ENCODE measurements at regions of chr13 and their contacts with region 1.

Region 1: DNA sequence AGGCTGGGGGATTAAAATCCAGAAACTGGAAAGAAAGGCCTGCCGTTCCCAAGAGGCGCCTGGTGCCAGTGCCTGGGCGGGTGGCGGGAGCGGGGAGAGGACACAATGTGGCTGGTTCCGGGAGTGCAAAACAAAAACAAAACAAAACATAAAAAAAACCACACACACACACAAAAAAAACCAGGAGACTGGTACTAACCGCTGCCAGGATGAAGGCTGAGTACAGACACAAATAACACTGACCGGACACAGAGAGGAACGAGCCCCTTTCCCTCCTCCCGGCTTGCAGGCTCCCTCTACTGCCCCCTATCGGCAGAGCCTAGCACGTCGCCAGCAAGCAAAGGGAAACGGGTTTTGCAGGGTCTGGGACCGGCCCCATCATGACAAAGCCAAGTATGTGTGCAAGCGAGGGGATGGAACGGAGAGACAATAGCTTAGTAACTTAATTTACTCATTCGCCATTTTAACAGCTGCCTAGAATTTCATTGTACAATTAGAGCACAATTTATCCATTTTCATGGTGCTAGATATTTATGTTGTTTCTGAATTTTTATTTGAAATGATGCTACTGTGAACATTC is 17.9 kb upstream of the ZDHHC20 start:
- DNase-seq: peak; percentile 74
- ATAC-seq: peak; percentile 85
- H3K4me3 ChIP-seq: peak overlapping the region; percentile 27
- H3K27ac ChIP-seq: no peak overlapping the region
- H3K4me1 ChIP-seq: no peaks in the 10 kb centered on the region
- H3K27me3 ChIP-seq: no peaks in the 10 kb centered on the region
- CTCF ChIP-seq: peak; percentile 83
- POLR2A ChIP-seq: no peak
- RAD21 ChIP-seq: peak; percentile 75

Region 2: DNA sequence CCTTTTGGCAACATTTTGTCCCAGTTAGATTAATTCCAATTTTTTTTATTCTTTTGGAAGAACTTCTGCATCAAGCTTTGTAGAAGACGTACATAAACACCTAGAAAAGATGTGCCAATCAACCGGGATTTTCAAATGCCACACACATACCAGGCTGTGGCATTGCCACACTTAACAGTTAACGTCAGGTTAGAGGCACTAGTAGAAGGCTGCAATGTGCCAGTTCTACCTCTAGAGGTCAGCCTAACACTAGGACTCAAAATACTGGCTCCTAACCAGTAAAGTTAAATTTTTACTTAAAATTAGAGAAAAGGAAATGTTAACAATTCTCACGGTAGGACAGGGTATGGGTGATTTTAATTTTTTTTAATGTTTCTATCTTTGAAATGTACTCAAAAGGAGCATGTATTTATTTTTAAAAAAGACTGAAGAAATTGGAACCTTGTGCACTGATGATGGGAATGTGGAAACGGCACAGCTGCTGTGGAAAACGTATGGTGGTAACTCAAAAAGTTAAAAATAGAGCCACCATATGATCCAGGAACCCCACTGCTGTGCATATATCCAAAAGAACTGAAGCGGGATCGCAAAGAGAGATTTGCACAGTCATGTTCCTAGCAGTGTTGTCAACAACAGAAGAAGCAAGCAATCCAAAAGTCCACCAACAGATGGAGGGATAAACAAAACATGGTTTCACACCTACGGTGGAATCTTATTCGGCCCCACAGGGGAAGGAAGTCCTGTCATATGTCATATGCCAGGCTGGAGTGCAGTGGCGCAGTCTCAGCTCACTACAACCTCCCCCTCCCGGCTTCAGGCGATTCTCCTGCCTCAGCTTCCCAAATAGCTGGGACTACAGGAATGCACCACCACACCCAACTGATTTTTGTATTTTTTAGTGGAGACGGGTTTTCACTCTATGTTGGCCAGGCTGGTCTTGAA is 981.6 kb before region 1 on chr13:
- CTCF ChIA-PET with region 1: no interaction called
- POLR2A ChIA-PET with region 1: no interaction called
- dilution Hi-C with region 1: no loop called
- in situ Hi-C with region 1: loop called (anchors 25 kb)
- intact Hi-C with region 1: loop called (anchors 5 kb)
- DNase-seq: peak; percentile 72
- ATAC-seq: peak; percentile 91
- H3K4me3 ChIP-seq: no peak overlapping the region
- H3K27ac ChIP-seq: no peak overlapping the region
- H3K4me1 ChIP-seq: peaks cover 5% of the 10 kb centered on the region
- H3K27me3 ChIP-seq: no peaks in the 10 kb centered on the region
- CTCF ChIP-seq: peak; percentile 94
- POLR2A ChIP-seq: no peak
- RAD21 ChIP-seq: peak; percentile 98

Region 3: DNA sequence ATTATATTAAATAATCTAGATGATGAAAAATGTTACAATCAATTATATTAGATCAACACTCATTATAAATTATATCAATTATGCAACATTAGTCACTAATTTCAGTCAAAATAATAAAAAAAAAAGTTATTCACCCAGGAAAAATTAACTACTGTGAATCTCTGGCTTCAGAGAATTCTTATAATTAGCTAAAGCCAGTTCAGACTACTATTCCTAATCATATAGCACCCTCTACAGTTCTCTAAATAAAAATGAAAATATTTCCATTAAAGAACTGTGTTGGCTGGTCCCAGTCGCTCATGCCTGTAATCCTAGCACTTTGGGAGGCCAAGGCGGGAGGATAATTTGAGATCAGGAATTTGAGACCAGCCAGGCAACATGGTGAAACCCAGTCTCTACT is 607.4 kb before region 1 on chr13:
- CTCF ChIA-PET with region 1: no interaction called
- POLR2A ChIA-PET with region 1: no interaction called
- dilution Hi-C with region 1: no loop called
- in situ Hi-C with region 1: no loop called
- intact Hi-C with region 1: loop called (anchors 5 kb)
- DNase-seq: peak; percentile 11
- ATAC-seq: peak; percentile 35; the same call in 1 of the 2 replicates
- H3K4me3 ChIP-seq: no peak overlapping the region
- H3K27ac ChIP-seq: no peak overlapping the region
- H3K4me1 ChIP-seq: peaks cover 5% of the 10 kb centered on the region
- H3K27me3 ChIP-seq: no peaks in the 10 kb centered on the region
- CTCF ChIP-seq: peak; percentile 39
- POLR2A ChIP-seq: no peak
- RAD21 ChIP-seq: peak; percentile 49

Region 4: DNA sequence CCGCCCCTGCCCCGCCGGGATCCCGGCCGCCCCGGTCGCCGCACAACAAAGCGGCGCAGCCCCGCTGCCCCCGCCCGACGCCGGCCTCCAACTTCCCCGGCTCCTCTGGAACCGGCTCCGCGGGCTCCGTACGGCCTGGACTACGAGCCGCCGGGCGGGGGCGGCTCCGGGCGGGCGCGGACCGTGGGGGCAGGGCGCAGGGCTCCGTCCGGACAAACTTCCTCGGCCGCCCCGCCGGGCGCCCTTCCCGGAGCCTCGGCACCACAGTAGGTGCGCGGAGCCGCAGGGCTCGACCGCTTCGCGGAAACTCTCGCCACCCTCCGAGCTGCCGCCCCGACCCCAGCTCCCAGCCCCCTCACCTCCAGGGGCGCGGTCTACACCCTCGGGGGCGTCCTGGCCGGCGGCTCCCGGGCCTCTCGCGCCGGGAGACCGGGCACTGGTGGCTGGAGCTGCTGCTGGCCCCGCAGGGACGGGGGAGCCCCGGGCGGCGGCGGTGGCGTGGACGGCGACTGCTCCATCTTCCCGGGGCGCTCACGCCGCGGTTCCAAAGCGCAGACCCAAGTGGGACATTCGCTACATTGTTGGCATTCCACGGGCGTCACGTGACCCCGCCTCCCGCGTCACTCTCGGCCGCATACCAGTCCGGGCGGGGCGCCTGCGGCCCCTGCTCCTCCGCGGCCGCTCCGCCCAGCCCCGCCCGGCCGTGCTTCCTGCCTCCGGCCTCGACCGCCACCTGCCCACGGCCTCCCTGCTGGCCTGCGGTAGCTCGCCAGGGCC is 415.8 kb before region 1 on chr13 and contains the start of gene LATS2:
- CTCF ChIA-PET with region 1: interaction called, 4 read pairs
- POLR2A ChIA-PET with region 1: no interaction called
- dilution Hi-C with region 1: no loop called
- in situ Hi-C with region 1: no loop called
- intact Hi-C with region 1: loop called (anchors 10 kb)
- DNase-seq: peak; percentile 94
- ATAC-seq: peak; percentile 87
- H3K4me3 ChIP-seq: peak within 1 kb of the TSS; percentile 74
- H3K27ac ChIP-seq: peak within 1 kb of the TSS; percentile 95
- H3K4me1 ChIP-seq: peaks cover 14% of the 10 kb centered on the region
- H3K27me3 ChIP-seq: no peaks in the 10 kb centered on the region
- CTCF ChIP-seq: peak; percentile 20; the same call in 1 of the 2 replicates
- POLR2A ChIP-seq: peak; percentile 93
- RAD21 ChIP-seq: peak; percentile 35
- total RNA-seq, gene LATS2: 12.7 and 16.4 TPM in 2 replicates

Region 5: GRCh38 chr13:21297914-21298831 is 178.8 kb before region 1 on chr13:
- CTCF ChIA-PET with region 1: interaction called, 20 read pairs
- POLR2A ChIA-PET with region 1: no interaction called
- dilution Hi-C with region 1: no loop called
- in situ Hi-C with region 1: loop called (anchors 5 kb)
- intact Hi-C with region 1: loop called (anchors 1 kb)
- DNase-seq: peak; percentile 87
- ATAC-seq: peak; percentile 99
- H3K4me3 ChIP-seq: peak overlapping the region; percentile 87
- H3K27ac ChIP-seq: peak overlapping the region; percentile 33; the same call in 1 of the 2 replicates
- H3K4me1 ChIP-seq: no peaks in the 10 kb centered on the region; the same call in 1 of the 2 replicates
- H3K27me3 ChIP-seq: no peaks in the 10 kb centered on the region
- CTCF ChIP-seq: peak; percentile 93
- POLR2A ChIP-seq: no peak
- RAD21 ChIP-seq: peak; percentile 47